ENCODE measurements at regions of chr15 and their contacts with region 1.

Region 1: DNA sequence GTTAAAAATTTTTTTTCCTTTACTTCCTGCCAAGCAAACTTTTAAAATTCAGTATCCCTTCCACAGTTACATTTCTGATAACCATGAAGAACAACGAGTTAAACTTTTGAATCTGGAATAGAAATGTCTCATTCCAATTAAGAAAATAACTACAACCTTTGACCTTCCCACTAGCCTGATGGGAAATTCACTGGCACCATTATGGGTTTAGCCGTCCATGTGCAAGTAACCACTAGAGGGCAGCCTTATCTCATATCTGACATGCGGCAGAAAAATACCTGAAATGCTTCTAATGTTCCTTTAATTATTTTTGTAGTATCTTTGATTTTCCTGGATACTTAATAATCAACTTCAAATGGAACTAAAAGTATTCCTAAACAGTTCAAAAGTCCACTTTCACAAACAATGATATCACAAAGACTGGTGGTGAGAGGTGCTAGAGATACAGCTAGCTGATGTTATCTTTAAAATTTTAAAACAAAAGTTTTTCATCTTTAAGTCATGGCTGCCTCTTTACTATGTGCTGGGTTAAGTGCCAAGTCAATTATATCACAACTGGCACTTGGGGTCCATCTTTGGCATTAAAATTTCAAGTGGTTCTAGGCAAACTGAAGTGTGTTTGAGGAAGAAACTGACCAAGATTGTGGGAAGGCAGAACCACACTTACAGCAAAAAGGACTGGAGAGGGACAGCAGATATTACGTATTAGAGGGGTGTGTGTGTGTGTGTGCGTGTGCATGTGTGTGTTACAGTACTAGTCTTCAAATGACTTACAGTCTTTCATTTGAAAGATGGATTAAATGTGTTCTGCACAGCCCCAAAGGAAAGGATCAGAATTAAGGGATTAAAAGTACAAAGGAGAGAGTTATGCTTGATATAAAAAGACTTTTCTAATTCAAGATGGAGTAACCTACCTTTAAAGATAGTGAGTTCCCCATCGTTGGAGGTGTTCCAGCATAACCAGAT is 107.1 kb upstream of the ICE2 start:
- DNase-seq: no peak
- ATAC-seq: peak; percentile 75

Region 2: GRCh38 chr15:60916679-60917460 is 330.8 kb after region 1 on chr15:
- intact Hi-C with region 1: loop called (anchors 2 kb)
- DNase-seq: peak; percentile 91
- ATAC-seq: peak; percentile 87

Region 3: GRCh38 chr15:61051569-61052031 is 465.6 kb after region 1 on chr15:
- intact Hi-C with region 1: loop called (anchors 10 kb)
- DNase-seq: peak; percentile 35
- ATAC-seq: peak; percentile 95